Pancreas (tissue), 10 donors: ENCODE measurements at regions of chr11 and their contacts with region 1.

Region 1: GRCh38 chr11:126194121-126194543 is 17.3 kb downstream of the RPUSD4 start:
- DNase-seq: peak in 2 of 6 donors; percentile 40 to 58
- ATAC-seq: peak; percentile 64 to 84 (median 77)
- H3K4me3 ChIP-seq: no peak overlapping the region
- H3K27ac ChIP-seq: no peak overlapping the region
- H3K4me1 ChIP-seq: no peaks in the 10 kb centered on the region
- H3K27me3 ChIP-seq: no peaks in the 10 kb centered on the region
- CTCF ChIP-seq: peak; percentile 21 to 57 (median 50)

Region 2: DNA sequence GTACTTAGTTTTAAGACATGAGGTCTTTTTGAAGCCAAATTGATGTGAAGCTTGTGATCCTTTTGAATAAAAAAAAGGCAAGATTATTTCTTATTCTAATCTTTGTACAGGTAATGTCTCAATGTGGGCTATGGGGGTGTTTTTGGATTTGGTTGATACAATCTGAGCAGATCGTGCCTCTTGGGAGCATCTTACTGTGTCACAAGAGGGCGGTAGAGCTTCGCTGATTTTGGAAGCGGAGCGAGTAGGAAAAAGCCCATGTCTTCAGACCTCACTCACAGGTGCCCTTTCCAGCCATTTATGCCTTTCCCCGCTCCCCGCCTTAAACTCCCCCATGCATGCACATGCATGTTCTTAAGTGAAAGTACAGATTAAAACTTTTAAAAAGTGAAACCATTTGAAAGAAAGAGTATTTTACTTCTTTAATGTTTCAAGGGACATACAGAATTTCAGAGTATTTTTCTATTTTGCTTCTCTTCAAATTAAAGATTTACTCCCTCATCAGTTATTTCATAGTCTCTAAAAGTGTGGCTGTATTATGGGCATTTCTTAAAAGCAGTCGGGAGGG is 271.0 kb before region 1 on chr11:
- intact Hi-C with region 1: loop called (anchors 5 to 10 kb)
- DNase-seq: peak in 4 of 6 donors; percentile 37 to 73 (median 50)
- ATAC-seq: peak; percentile 82 to 94 (median 84)
- H3K4me3 ChIP-seq: no peak overlapping the region
- H3K27ac ChIP-seq: no peak overlapping the region
- H3K4me1 ChIP-seq: peaks cover 0 to 8% (median 0%) of the 10 kb centered on the region in 3 donors
- H3K27me3 ChIP-seq: no peaks in the 10 kb centered on the region
- CTCF ChIP-seq: peak; percentile 49 to 66 (median 62)

Region 3: GRCh38 chr11:126059238-126059781 is 134.8 kb before region 1 on chr11:
- intact Hi-C with region 1: loop called in 1 of 3 experiments (anchors 10 kb)
- DNase-seq: no peak
- ATAC-seq: no peak
- H3K4me3 ChIP-seq: no peak overlapping the region
- H3K27ac ChIP-seq: no peak overlapping the region
- H3K4me1 ChIP-seq: no peaks in the 10 kb centered on the region
- H3K27me3 ChIP-seq: peaks cover 0 to 8% (median 0%) of the 10 kb centered on the region in 4 donors
- CTCF ChIP-seq: no peak